Endothelial cell of umbilical vein (primary cell): ENCODE measurements at regions of chr11 and their contacts with region 1.

Region 1: DNA sequence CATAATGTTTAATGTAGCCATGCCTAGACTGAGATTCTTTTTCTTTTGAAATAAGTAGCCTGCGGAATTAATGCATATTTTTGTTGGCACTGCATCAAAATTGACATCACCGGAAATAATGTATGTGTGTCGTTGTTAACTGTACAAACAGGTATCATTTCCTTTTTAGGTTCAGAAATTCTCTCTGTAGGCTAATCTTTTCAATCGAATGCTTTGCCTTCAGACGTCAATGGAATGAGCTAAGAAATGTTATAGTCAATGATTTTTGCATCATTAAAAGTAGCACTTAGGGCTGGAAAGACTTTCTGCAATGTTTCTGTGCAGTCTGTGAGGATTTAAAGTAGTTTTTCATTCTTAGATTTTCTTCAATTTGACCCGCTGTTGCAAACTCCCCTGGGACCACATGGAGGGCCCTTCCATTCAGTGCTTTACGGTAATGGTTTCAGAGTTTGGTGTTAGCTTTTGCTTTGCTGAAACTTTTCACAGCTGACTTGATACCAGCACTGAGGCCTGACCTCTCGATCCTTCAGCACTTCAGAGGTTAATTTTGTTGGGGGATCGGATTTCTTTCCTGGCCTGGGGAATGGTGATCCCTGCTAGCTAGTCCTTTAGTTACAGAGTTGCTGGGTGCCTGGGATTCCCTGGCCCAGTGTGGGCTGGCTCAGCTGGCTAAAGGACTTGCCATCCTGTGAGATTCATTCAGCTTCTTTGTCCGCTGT is 137.8 kb downstream of the DBX1 start:
- DNase-seq: peak; percentile 90
- H3K4me3 ChIP-seq: peak overlapping the region in 1 of 3 experiments; percentile 13
- H3K27ac ChIP-seq: peak overlapping the region; percentile 88
- H3K4me1 ChIP-seq: peaks cover 25% of the 10 kb centered on the region
- H3K27me3 ChIP-seq: no peaks in the 10 kb centered on the region
- CTCF ChIP-seq: no peak
- POLR2A ChIP-seq: no peak

Region 2: DNA sequence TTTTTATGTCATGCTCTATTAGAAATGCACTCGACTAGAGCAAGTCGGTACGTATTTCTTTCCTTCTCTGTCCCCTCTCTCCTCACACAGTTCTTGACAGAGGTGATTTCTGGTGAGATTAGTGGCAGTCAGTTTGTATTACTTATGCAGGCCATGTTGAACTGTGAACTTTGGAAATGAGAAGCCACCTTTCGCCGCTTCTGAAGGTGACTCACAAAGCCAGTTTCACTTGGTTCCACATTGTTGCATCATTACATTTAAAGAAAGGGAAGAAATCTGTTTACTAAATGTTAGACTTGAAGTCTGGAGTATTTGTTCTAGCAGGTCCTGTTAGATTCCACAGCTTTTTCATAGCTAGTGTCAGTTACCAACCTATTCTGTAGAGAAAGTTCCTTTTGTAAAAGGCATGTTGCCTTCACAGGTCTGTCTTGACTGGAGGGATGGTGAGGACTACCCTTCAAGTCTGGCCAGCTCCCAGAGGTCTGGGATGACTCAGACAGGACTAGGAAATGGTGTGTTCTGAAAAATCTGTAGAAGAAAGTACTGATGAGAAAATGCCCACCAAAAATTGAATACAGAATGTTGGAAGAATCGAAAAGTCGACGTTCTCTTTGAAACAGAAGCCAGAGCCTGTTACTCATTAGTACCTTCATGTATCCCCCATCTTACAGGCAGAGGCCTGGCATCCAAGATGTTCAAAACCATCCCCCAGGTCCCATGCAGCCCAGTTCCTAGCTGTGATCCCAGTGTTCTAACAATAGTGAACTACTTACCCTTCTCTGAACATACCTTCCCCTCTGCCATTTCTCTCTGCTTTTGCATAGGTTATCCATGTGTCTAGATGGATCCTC is 43.6 kb before region 1 on chr11:
- CTCF ChIA-PET with region 1: interaction called, 4 read pairs
- POLR2A ChIA-PET with region 1: no interaction called
- dilution Hi-C with region 1: no loop called
- intact Hi-C with region 1: loop called (anchors 1 kb)
- DNase-seq: peak; percentile 85
- H3K4me3 ChIP-seq: no peak overlapping the region
- H3K27ac ChIP-seq: peak overlapping the region; percentile 66
- H3K4me1 ChIP-seq: peaks cover 39% of the 10 kb centered on the region
- H3K27me3 ChIP-seq: no peaks in the 10 kb centered on the region
- CTCF ChIP-seq: no peak
- POLR2A ChIP-seq: no peak

Region 3: GRCh38 chr11:20097319-20098221 is 75.0 kb after region 1 on chr11:
- CTCF ChIA-PET with region 1: no interaction called
- POLR2A ChIA-PET with region 1: no interaction called
- dilution Hi-C with region 1: no loop called
- intact Hi-C with region 1: loop called (anchors 1 kb)
- DNase-seq: peak; percentile 99
- H3K4me3 ChIP-seq: peak overlapping the region in 1 of 3 experiments; percentile 1
- H3K27ac ChIP-seq: peak overlapping the region; percentile 94
- H3K4me1 ChIP-seq: peaks cover 64% of the 10 kb centered on the region
- H3K27me3 ChIP-seq: no peaks in the 10 kb centered on the region
- CTCF ChIP-seq: no peak
- POLR2A ChIP-seq: peak; percentile 34